HepG2 (cell line): ENCODE measurements at regions of chr7 and their contacts with region 1.

Region 1: DNA sequence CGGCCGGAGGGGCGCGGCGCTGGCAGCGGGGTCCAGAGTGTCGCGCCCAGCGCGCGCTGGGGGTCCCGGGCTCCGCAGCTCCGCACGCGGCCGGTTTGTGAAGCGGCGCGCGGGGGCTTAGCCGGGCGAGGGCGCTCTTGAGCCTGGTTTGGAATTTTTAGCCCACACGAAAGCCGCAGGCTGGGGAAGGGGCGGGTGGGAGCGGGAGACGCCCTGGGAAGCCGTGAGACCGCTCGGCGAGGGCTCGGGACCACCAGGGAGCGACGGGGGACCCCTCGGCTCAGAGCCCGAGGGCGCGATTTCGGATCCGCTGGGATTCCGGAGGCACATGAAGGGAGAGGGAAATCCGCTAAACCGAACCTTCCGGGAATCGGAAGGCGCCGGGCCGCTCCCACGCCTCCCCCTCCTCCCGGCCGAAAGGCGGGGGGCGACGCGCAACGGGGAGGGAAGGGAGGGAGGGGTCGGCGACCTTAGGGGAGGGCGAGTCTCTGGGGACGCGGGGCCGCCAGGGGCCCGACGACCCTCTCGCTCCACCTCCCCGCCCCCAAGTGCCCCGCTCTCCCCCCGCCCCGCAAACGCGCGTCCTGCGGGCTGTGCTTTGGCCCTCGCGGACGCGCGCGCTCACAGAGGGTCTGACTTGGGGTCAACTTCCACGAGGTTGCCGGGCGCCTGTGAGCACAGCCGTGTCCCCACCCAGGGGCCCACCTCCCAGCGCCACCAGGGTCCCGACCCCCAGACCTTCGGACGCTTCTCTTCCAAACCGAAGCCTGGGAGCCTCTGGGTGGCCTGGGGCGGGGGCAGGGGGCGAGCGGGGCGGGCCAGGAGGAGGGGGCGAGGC is 5.1 kb upstream of the ELFN1 start:
- DNase-seq: peak; percentile 16
- ATAC-seq: peak; percentile 28
- H3K4me3 ChIP-seq: peak overlapping the region; percentile 26 to 75 (median 38); a peak in 4 of 6 replicates
- H3K27ac ChIP-seq: no peak overlapping the region
- H3K4me1 ChIP-seq: peaks cover 22% of the 10 kb centered on the region; the same call in 1 of the 2 replicates
- H3K27me3 ChIP-seq: peaks cover 8 to 61% of the 10 kb centered on the region in 2 experiments
- CTCF ChIP-seq: peak; percentile 79
- EP300 ChIP-seq: no peak
- POLR2A ChIP-seq: no peak
- RAD21 ChIP-seq: peak; percentile 89

Region 2: GRCh38 chr7:1290026-1290678 is 374.8 kb before region 1 on chr7:
- CTCF ChIA-PET with region 1: no interaction called
- POLR2A ChIA-PET with region 1: no interaction called
- in situ Hi-C with region 1: no loop called
- intact Hi-C with region 1: no loop called
- DNase-seq: no peak
- ATAC-seq: no peak
- H3K4me3 ChIP-seq: no peak overlapping the region
- H3K27ac ChIP-seq: no peak overlapping the region
- H3K4me1 ChIP-seq: no peaks in the 10 kb centered on the region
- H3K27me3 ChIP-seq: peaks cover 22 to 90% of the 10 kb centered on the region in 2 experiments
- CTCF ChIP-seq: no peak
- EP300 ChIP-seq: no peak
- POLR2A ChIP-seq: no peak
- RAD21 ChIP-seq: no peak

Region 3: DNA sequence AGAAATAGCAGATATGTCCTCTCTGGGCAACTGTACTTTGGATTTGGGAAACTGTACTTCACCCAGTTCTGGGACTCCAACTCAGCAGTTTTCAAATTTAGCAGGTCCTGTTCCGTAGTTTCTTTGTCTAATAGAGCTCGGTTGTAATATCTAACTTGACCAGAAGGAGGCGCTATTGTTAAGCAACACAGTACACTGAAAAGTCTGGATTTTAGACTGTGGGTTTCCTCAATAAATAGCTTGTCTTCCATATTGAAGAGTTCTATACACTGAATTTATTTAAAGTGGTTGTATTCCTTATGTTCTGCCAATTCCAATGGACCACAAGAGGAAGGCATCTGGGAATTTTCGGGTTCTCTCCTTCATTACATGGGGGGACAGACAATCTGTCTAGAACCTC is 45.0 kb after region 1 on chr7:
- CTCF ChIA-PET with region 1: no interaction called
- POLR2A ChIA-PET with region 1: no interaction called
- in situ Hi-C with region 1: loop called (anchors 5 kb)
- intact Hi-C with region 1: loop called (anchors 2 kb)
- DNase-seq: no peak
- ATAC-seq: no peak
- H3K4me3 ChIP-seq: no peak overlapping the region
- H3K27ac ChIP-seq: no peak overlapping the region
- H3K4me1 ChIP-seq: peaks cover 35% of the 10 kb centered on the region
- H3K27me3 ChIP-seq: no peaks in the 10 kb centered on the region; a peak in 1 of 5 replicates
- CTCF ChIP-seq: 0 out of 2 replicates have a peak, but pooled peaks have one; percentile 13
- EP300 ChIP-seq: no peak
- POLR2A ChIP-seq: no peak
- RAD21 ChIP-seq: no peak